Body of pancreas (tissue), 4 donors: ENCODE measurements at regions of chr15 and their contacts with region 1.

Region 1: GRCh38 chr15:63291507-63291906 is 14.1 kb downstream of the APH1B start:
- DNase-seq: no peak
- ATAC-seq: no peak
- H3K4me3 ChIP-seq: no peak overlapping the region
- H3K27ac ChIP-seq: no peak overlapping the region
- H3K4me1 ChIP-seq: peaks cover 5% of the 10 kb centered on the region
- H3K27me3 ChIP-seq: no peaks in the 10 kb centered on the region
- CTCF ChIP-seq: no peak
- POLR2A ChIP-seq: no peak

Region 2: GRCh38 chr15:62977952-62978811 is 313.3 kb before region 1 on chr15:
- intact Hi-C with region 1: no loop called
- DNase-seq: no peak
- ATAC-seq: no peak
- H3K4me3 ChIP-seq: no peak overlapping the region
- H3K27ac ChIP-seq: peak overlapping the region in 2 of 4 donors; percentile 13 to 54
- H3K4me1 ChIP-seq: no peaks in the 10 kb centered on the region
- H3K27me3 ChIP-seq: no peaks in the 10 kb centered on the region
- CTCF ChIP-seq: no peak
- POLR2A ChIP-seq: no peak

Region 3: GRCh38 chr15:63402498-63403253 is 111.2 kb after region 1 on chr15:
- intact Hi-C with region 1: loop called (anchors 5 kb)
- DNase-seq: no peak
- ATAC-seq: peak; percentile 73
- H3K4me3 ChIP-seq: no peak overlapping the region
- H3K27ac ChIP-seq: no peak overlapping the region
- H3K4me1 ChIP-seq: no peaks in the 10 kb centered on the region
- H3K27me3 ChIP-seq: no peaks in the 10 kb centered on the region
- CTCF ChIP-seq: peak; percentile 55 to 81 (median 77)
- POLR2A ChIP-seq: no peak